ENCODE measurements at regions of chr7 and their contacts with region 1.

Region 1: DNA sequence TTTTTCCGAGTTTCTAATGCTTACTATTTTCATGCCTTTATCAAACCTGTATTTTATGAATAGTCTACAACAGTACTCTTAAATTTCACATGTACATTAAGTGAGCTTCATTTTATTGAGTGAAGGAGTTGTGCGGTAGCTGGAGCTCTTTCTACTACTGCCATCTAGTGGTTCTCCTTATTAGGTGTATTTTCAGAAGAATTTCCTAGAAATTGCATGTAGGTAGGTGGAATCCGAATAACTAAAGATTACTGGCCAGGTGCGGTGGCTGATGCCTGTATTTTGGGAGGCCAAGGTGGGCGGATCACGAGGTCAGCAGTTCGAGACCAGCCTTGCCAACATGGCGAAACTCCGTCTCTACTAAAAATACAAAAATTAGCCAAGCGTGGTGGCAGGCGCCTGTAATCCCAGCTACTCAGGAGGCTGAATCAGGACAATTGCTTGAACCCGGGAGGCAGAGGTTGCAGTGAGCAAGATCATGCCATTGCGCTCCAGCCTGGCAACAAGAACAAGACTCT is 38.3 kb downstream of the LRRC72 start:
- DNase-seq: no peak
- H3K4me3 Mint-ChIP-seq: no peak overlapping the region
- H3K27ac Mint-ChIP-seq: no peak overlapping the region
- H3K4me1 Mint-ChIP-seq: peaks cover 20% of the 10 kb centered on the region
- H3K27me3 Mint-ChIP-seq: no peaks in the 10 kb centered on the region

Region 2: GRCh38 chr7:14717816-14718215 is 1847.2 kb before region 1 on chr7:
- CTCF ChIA-PET with region 1: no interaction called
- POLR2A ChIA-PET with region 1: no interaction called
- intact Hi-C with region 1: loop called (anchors 10 kb)
- DNase-seq: no peak
- H3K4me3 Mint-ChIP-seq: no peak overlapping the region
- H3K27ac Mint-ChIP-seq: no peak overlapping the region
- H3K4me1 Mint-ChIP-seq: peaks cover 9% of the 10 kb centered on the region
- H3K27me3 Mint-ChIP-seq: no peaks in the 10 kb centered on the region

Region 3: DNA sequence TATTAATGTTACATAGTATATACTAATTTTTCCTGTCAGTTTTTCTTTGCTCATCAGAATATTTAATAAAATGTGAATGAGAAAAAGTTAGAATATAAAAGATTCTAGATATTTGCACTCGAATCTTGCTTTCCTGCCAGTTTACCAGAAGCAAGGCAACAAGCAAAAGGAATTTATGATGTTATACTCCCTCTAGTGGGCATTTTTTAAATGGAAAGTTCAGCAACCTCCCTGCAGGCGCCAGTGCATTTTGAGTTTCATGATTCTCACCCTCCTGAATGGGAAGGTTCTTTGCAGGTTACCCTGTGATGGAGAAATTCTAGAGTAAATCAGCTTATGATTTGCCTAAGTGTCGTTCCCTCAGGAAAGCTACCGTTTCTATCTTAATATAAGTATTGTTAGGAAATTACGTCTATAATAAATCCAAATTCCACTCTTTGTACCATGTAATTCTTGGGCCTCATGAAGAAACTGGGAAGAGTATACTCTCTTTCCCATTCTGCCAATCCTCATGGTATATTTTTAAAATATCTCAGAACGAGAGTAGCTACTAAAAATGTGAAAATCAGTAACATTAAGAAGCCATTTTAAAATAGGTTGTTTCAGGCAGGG is 493.6 kb before region 1 on chr7:
- CTCF ChIA-PET with region 1: interaction called, 12 read pairs
- POLR2A ChIA-PET with region 1: no interaction called
- intact Hi-C with region 1: no loop called
- DNase-seq: peak; percentile 14
- H3K4me3 Mint-ChIP-seq: no peak overlapping the region
- H3K27ac Mint-ChIP-seq: no peak overlapping the region
- H3K4me1 Mint-ChIP-seq: no peaks in the 10 kb centered on the region
- H3K27me3 Mint-ChIP-seq: peaks cover 2% of the 10 kb centered on the region

Region 4: DNA sequence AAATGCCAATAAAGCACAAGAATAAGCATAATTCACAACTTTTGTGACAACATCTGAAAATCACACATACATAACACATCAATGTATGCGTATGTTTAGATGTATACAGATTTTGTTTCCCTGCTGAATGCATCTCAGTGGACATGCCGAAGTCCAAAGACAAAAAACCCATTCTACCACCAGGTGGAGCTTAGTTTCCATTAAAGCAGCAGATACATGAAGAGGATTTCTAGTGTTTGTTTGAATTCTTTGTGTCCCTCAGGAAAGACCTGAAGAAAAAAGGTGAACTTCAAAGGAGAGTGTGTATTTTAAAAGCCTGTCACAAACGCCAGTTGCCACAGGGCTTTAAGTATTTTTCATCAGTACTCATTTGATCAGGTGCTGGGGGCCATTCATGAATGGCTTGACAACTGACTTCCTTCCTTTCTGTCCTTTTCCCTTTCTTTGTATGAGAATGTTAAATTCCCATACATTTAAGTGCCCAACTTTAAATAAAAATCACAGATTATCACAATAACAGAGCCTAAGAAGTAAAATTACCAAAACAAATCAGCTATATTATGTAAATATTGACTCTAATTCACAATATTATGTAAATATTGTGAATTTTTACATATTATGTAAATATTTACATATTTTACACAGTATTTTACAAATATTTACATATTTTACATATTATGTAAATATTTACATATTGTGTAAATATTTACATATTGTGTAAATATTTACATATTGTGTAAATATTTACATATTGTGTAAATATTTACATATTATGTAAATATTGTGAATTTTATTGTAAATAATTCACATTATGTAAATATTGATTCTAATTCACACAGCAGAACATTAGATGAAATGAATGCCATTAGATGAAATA is 486.7 kb before region 1 on chr7:
- CTCF ChIA-PET with region 1: interaction called, 37 read pairs
- POLR2A ChIA-PET with region 1: no interaction called
- intact Hi-C with region 1: loop called (anchors 1 kb)
- DNase-seq: no peak
- H3K4me3 Mint-ChIP-seq: no peak overlapping the region
- H3K27ac Mint-ChIP-seq: no peak overlapping the region
- H3K4me1 Mint-ChIP-seq: no peaks in the 10 kb centered on the region
- H3K27me3 Mint-ChIP-seq: no peaks in the 10 kb centered on the region

Region 5: DNA sequence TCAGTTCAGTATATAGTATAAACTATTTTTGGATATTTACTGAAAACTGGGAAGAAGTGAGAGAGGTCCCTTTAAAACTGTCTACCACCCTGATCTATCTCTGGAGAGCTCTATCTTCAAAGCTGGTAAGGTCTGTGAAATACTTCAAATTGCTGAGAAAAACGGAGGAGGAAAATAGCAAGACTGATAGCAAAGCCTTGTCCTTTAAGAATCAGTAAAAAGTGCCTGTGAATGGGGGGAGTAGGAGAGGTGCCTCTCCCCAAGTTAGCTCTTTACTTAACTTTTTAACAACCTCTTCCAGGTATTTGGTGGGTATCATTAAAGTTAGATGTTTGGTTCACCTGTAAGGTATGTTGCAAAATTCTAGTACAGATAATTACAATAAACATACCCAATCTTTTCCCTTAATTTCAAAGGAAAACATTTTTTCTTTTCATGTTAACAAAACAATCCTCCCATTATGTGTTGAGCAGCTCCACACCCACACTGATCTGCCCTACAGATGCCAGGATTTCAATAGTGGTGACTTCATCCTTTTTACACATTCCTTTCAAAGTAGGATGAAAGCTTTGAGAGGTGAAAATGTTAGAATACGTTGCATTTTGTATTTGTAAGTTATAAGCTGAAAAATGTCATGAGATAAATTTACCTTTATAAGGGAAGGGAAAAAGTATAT is 292.8 kb before region 1 on chr7:
- CTCF ChIA-PET with region 1: no interaction called
- POLR2A ChIA-PET with region 1: no interaction called
- intact Hi-C with region 1: no loop called
- DNase-seq: no peak
- H3K4me3 Mint-ChIP-seq: no peak overlapping the region
- H3K27ac Mint-ChIP-seq: no peak overlapping the region
- H3K4me1 Mint-ChIP-seq: no peaks in the 10 kb centered on the region
- H3K27me3 Mint-ChIP-seq: no peaks in the 10 kb centered on the region

Region 6: DNA sequence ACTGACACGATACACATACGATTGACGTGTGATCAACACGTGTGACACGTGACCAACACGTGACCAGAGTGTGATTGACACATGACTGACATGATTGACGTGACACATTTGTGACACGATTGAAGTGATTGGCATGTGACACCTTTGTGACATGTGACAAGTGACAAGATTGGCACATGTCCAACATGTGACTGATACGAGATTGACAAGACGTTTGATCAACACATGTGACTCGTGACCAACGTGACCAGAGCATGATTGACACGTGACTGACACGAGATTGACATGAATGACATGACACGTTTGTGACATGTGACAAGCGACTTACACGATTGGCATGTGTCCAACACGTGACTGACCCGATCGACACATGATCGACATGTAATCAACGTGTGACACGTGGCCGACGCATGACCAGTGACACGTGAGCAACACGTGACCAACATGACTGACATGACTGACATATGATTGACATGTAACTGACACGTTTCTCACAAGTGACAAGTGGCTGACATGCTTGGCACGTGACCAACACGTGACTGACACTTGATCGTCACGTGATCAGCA is 165.6 kb before region 1 on chr7:
- CTCF ChIA-PET with region 1: no interaction called
- POLR2A ChIA-PET with region 1: no interaction called
- intact Hi-C with region 1: no loop called
- DNase-seq: no peak
- H3K4me3 Mint-ChIP-seq: no peak overlapping the region
- H3K27ac Mint-ChIP-seq: no peak overlapping the region
- H3K4me1 Mint-ChIP-seq: no peaks in the 10 kb centered on the region
- H3K27me3 Mint-ChIP-seq: no peaks in the 10 kb centered on the region

Region 7: DNA sequence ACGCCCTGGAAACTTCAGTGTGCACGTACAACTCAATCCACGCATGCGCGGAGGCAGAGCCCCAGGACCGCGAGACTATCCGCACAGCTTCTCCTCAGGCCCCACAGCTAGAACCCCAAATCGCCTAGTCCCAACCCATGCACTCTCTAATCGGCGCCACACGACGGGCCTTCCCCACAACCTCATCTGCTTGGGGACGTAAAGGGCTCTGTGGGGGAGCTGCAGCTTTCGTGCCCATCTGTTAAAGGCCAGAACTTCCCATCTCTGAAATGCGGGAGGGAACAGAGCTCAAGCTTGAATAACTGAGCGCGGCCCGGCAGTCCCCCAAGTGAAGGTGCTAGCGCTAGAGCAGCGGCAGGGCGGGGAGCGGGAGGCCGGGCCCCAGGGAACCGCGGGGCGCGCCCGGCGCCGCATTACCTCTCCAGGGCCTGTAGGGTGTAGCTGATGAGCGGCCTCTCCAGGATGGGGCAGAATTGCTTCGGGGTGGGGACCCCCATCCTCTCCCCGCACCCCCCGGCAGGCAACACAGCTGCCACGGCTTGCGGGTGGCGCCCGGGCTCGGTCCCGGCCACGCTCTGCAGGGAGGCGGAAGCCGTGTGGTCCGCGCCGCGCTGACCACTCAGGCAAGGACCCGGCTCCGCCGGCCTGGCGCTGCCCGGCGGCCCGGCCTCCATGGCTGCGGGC is 144.2 kb before region 1 on chr7:
- CTCF ChIA-PET with region 1: interaction called, 18 read pairs
- POLR2A ChIA-PET with region 1: no interaction called
- intact Hi-C with region 1: no loop called
- DNase-seq: peak; percentile 89
- H3K4me3 Mint-ChIP-seq: peak overlapping the region; percentile 89
- H3K27ac Mint-ChIP-seq: peak overlapping the region; percentile 96
- H3K4me1 Mint-ChIP-seq: peaks cover 17% of the 10 kb centered on the region
- H3K27me3 Mint-ChIP-seq: peaks cover 3% of the 10 kb centered on the region

Region 8: DNA sequence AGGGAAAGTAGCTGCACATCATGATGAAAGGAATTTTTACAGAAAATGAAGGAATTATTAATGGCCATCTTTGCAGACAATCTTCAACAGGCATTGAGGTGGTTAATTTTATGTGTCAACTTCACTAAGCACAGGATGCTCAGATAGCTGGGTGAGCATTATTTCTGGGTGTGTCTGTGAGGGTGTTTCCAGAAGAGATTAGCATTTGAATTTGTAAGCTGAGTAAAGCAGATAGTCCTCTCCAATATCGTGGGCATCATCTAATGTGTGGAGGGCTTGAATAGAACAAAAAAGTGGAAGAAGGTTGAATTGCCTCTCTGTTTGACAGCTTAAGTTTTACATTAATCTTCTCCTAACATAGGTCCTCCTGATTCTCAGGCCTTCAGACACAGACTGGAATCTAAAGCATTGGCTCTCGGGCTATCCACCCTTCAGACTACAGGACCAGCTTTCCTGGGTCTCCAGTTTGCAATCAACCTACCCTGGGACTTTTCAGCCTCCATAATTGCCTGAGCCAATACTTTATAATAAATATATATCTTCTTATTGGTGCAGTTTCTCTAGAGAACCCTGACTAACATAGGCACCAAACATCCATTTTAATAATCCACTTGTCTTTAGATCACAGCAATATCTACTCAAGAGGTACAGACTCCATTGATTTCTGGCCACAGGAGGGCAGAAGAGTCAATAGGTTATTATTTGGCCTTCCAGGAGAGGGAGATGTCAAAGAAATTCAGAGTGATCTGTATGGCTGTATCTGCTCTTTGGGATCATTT is 133.1 kb before region 1 on chr7:
- CTCF ChIA-PET with region 1: interaction called, 42 read pairs
- POLR2A ChIA-PET with region 1: no interaction called
- intact Hi-C with region 1: loop called (anchors 1 kb)
- DNase-seq: peak; percentile 18
- H3K4me3 Mint-ChIP-seq: no peak overlapping the region
- H3K27ac Mint-ChIP-seq: no peak overlapping the region
- H3K4me1 Mint-ChIP-seq: no peaks in the 10 kb centered on the region
- H3K27me3 Mint-ChIP-seq: no peaks in the 10 kb centered on the region

Region 9: DNA sequence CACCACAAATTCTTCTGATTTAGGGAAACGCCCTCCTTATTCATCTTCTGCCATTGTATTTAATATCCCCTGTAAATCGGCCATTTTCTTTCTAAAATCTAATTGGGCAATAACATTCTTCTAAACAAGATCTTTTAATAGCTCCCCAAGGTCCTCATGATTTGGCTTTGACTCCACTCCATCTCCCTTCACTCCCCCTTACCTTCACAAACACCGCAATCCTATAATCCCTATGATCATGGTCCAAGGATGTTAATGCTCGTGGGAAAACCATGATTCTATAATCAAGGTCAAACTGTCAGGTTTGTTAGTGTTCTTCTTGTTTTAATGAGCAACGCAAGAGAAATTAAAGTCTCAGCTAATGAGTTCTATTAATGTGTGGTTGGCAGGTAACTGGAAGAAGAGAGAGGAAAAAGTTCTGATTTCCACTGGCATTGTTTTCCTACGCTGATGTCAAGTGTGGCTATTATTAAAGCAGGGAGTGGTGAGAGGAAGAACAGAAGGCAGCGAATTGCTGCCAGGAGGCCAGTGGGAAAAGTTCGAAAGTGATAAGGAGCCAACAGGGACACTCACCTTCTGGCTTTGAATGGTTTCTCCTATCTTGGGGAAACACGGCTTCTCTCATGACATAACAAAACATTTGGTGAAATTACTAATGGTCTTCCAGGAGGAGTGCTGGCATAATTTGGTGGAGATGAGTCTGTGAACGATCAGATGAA is 10.3 kb before region 1 on chr7:
- CTCF ChIA-PET with region 1: interaction called, 20 read pairs
- POLR2A ChIA-PET with region 1: no interaction called
- intact Hi-C with region 1: no loop called
- DNase-seq: no peak
- H3K4me3 Mint-ChIP-seq: no peak overlapping the region
- H3K27ac Mint-ChIP-seq: no peak overlapping the region
- H3K4me1 Mint-ChIP-seq: no peaks in the 10 kb centered on the region
- H3K27me3 Mint-ChIP-seq: no peaks in the 10 kb centered on the region

Measured in activated CD4-positive, alpha-beta memory T cell treated with anti-CD3 and anti-CD28 coated beads for 36 hours (primary cell).